ENCODE measurements at regions of chr5 and their contacts with region 1.

Region 1: GRCh38 chr5:115169487-115170133 is at the start of gene TRIM36:
- DNase-seq: peak; percentile 90
- H3K4me3 ChIP-seq: peak within 1 kb of the TSS; percentile 14 to 61 (median 24)
- H3K27ac ChIP-seq: no peak within 1 kb of the TSS
- H3K4me1 ChIP-seq: peaks cover 11% of the 10 kb centered on the region
- H3K27me3 ChIP-seq: peaks cover 22 to 50% of the 10 kb centered on the region in 2 experiments
- CTCF ChIP-seq: peak in 1 of 2 donors; percentile 24
- POLR2A ChIP-seq: no peak
- total RNA-seq, gene TRIM36: 0.69 and 1.2 TPM in 2 replicates

Region 2: GRCh38 chr5:115180165-115180709 is 10.6 kb after region 1 on chr5:
- CTCF ChIA-PET with region 1: interaction called, 4 read pairs
- POLR2A ChIA-PET with region 1: no interaction called
- dilution Hi-C with region 1: no loop called
- intact Hi-C with region 1: loop called (anchors 1 kb)
- DNase-seq: peak; percentile 33
- H3K4me3 ChIP-seq: peak overlapping the region; percentile 36 to 53 (median 44)
- H3K27ac ChIP-seq: no peak overlapping the region
- H3K4me1 ChIP-seq: peaks cover 9% of the 10 kb centered on the region
- H3K27me3 ChIP-seq: peaks cover 53 to 74% of the 10 kb centered on the region in 2 experiments
- CTCF ChIP-seq: no peak
- POLR2A ChIP-seq: no peak

Region 3: GRCh38 chr5:115246361-115246991 is 76.9 kb after region 1 on chr5:
- CTCF ChIA-PET with region 1: interaction called, 4 read pairs
- POLR2A ChIA-PET with region 1: no interaction called
- dilution Hi-C with region 1: no loop called
- intact Hi-C with region 1: loop called (anchors 5 kb)
- DNase-seq: peak; percentile 49
- H3K4me3 ChIP-seq: no peak overlapping the region
- H3K27ac ChIP-seq: no peak overlapping the region
- H3K4me1 ChIP-seq: no peaks in the 10 kb centered on the region
- H3K27me3 ChIP-seq: no peaks in the 10 kb centered on the region
- CTCF ChIP-seq: peak; percentile 34 to 37
- POLR2A ChIP-seq: no peak